ENCODE measurements at regions of chr21 and their contacts with region 1.

Region 1: GRCh38 chr21:26593800-26594199 is 20.7 kb upstream of the CYYR1 start:
- DNase-seq: no peak
- H3K4me3 ChIP-seq: no peak overlapping the region
- H3K27ac ChIP-seq: no peak overlapping the region
- H3K4me1 ChIP-seq: no peaks in the 10 kb centered on the region
- H3K27me3 ChIP-seq: no peaks in the 10 kb centered on the region
- CTCF ChIP-seq: no peak
- POLR2A ChIP-seq: no peak

Region 2: GRCh38 chr21:26212211-26212610 is 381.6 kb before region 1 on chr21:
- intact Hi-C with region 1: no loop called
- DNase-seq: no peak
- H3K4me3 ChIP-seq: no peak overlapping the region
- H3K27ac ChIP-seq: no peak overlapping the region
- H3K4me1 ChIP-seq: no peaks in the 10 kb centered on the region
- H3K27me3 ChIP-seq: no peaks in the 10 kb centered on the region
- CTCF ChIP-seq: no peak
- POLR2A ChIP-seq: no peak

Region 3: GRCh38 chr21:26583769-26584168 is 10.0 kb before region 1 on chr21:
- intact Hi-C with region 1: no loop called
- DNase-seq: no peak
- H3K4me3 ChIP-seq: no peak overlapping the region
- H3K27ac ChIP-seq: no peak overlapping the region
- H3K4me1 ChIP-seq: no peaks in the 10 kb centered on the region
- H3K27me3 ChIP-seq: no peaks in the 10 kb centered on the region
- CTCF ChIP-seq: no peak
- POLR2A ChIP-seq: no peak

Region 4: GRCh38 chr21:27143476-27143875 is 549.7 kb after region 1 on chr21:
- intact Hi-C with region 1: loop called (anchors 5 kb)
- DNase-seq: no peak
- H3K4me3 ChIP-seq: no peak overlapping the region
- H3K27ac ChIP-seq: no peak overlapping the region
- H3K4me1 ChIP-seq: no peaks in the 10 kb centered on the region
- H3K27me3 ChIP-seq: no peaks in the 10 kb centered on the region
- CTCF ChIP-seq: no peak
- POLR2A ChIP-seq: no peak